ENCODE measurements at regions of chr11 and their contacts with region 1.

Region 1: GRCh38 chr11:118705111-118705741 is 25.8 kb upstream of the TREH start:
- DNase-seq: peak; percentile 70
- ATAC-seq: peak; percentile 86
- H3K4me3 Mint-ChIP-seq: peak overlapping the region; percentile 41
- H3K27ac Mint-ChIP-seq: peak overlapping the region; percentile 82
- H3K4me1 Mint-ChIP-seq: peaks cover 28% of the 10 kb centered on the region
- H3K27me3 Mint-ChIP-seq: no peaks in the 10 kb centered on the region
- CTCF ChIP-seq: no peak

Region 2: GRCh38 chr11:118948000-118948399 is 242.8 kb after region 1 on chr11:
- CTCF ChIA-PET with region 1: no interaction called
- POLR2A ChIA-PET with region 1: no interaction called
- intact Hi-C with region 1: loop called (anchors 5 kb)
- DNase-seq: no peak
- ATAC-seq: no peak
- H3K4me3 Mint-ChIP-seq: no peak overlapping the region
- H3K27ac Mint-ChIP-seq: no peak overlapping the region
- H3K4me1 Mint-ChIP-seq: peaks cover 5% of the 10 kb centered on the region
- H3K27me3 Mint-ChIP-seq: no peaks in the 10 kb centered on the region
- CTCF ChIP-seq: no peak

Measured in activated CD8-positive, alpha-beta T cell treated with anti-CD3 and anti-CD28 coated beads for 36 hours (primary cell).